Posterior vena cava (tissue), 2 donors: ENCODE measurements at regions of chr18 and their contacts with region 1.

Region 1: DNA sequence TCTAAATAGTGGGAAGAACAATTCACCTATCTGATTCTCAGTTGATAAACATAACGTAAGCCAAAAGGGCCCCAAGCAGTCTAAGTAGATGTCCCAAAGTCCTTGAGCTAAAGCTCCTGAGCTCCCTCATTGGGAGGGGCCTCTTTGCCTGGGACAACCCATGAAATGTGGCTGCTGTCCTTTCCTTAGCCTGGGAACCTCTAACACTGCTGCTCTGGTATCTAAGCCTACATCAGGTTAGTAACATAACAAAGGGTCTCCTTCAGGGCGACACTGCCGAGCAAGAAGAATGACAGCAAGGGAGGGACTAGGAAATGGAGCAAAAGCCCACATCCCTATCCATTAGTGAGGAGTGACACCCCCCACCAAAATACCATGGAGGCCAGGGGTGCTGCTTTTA is 98.3 kb downstream of the MAPRE2 start:
- DNase-seq: no peak

Region 2: GRCh38 chr18:35104391-35105051 is 35.0 kb before region 1 on chr18:
- intact Hi-C with region 1: loop called in 1 of 2 experiments (anchors 2 kb)
- DNase-seq: no peak

Region 3: GRCh38 chr18:35220432-35220831 is 80.9 kb after region 1 on chr18:
- intact Hi-C with region 1: no loop called
- DNase-seq: no peak

Region 4: DNA sequence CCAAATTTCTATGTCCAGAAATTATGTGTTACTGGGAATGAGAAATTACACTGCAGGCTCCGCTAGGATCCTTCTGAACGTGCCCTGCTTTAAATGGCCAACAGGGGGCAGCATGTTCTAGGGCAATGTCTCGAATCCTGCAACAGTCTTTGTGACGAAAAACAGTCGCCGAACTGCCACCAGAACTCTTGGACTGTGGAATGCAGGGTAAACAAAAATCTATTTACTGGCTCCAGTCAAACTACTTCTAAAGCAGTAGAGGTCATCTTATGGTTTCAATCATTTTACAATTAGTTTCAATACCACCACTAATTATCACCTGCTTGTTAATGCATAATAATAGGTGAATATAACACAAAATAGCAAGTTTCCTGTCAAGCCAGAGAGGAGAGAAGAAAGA is 91.5 kb after region 1 on chr18:
- intact Hi-C with region 1: no loop called
- DNase-seq: peak; percentile 89